Sciatic nerve (tissue), 2 donors: ENCODE measurements at regions of chr4 and their contacts with region 1.

Region 1: GRCh38 chr4:80142394-80143306 is 54.7 kb upstream of the PRDM8 start:
- DNase-seq: no peak
- ATAC-seq: no peak

Region 2: GRCh38 chr4:79738072-79738471 is 404.6 kb before region 1 on chr4:
- intact Hi-C with region 1: no loop called
- DNase-seq: no peak
- ATAC-seq: no peak

Region 3: DNA sequence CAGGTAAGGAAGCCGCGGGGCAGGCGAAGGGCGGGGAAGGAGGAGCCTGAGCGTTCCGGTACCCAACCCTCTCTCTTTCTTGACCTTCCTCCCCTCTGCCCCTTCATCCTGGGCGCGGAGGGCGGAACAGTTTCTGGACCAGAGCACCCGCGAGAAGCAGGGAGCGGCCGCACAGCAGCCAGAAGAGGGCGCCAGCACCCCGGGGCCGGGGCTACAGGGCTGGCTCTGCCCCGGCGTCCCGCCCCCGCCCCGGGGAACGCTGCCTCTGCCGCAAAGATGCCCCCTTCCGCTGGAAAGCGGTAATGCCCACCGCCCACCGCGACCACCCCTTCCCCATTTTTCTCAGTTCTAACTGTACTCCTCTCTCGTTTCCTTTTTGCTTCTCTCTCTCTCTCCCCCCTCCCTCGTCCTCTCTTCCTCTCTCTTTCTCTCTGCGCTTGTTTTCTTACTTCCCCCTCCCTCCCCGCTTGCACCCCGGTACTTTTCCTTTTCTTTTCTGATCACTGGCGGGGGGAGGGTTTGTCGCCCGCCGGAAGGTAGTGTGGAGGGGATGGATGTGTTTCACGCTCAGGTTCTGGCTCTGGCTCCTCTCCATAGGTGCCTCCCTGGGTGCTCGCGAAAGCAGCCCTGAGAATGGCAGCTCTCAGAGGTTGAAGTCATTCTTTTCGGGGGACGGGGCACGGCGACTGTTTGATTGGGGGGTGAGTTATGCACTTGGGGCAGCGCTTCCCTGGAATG is 41.6 kb after region 1 on chr4:
- intact Hi-C with region 1: no loop called
- DNase-seq: peak; percentile 97
- ATAC-seq: peak; percentile 97

Region 4: DNA sequence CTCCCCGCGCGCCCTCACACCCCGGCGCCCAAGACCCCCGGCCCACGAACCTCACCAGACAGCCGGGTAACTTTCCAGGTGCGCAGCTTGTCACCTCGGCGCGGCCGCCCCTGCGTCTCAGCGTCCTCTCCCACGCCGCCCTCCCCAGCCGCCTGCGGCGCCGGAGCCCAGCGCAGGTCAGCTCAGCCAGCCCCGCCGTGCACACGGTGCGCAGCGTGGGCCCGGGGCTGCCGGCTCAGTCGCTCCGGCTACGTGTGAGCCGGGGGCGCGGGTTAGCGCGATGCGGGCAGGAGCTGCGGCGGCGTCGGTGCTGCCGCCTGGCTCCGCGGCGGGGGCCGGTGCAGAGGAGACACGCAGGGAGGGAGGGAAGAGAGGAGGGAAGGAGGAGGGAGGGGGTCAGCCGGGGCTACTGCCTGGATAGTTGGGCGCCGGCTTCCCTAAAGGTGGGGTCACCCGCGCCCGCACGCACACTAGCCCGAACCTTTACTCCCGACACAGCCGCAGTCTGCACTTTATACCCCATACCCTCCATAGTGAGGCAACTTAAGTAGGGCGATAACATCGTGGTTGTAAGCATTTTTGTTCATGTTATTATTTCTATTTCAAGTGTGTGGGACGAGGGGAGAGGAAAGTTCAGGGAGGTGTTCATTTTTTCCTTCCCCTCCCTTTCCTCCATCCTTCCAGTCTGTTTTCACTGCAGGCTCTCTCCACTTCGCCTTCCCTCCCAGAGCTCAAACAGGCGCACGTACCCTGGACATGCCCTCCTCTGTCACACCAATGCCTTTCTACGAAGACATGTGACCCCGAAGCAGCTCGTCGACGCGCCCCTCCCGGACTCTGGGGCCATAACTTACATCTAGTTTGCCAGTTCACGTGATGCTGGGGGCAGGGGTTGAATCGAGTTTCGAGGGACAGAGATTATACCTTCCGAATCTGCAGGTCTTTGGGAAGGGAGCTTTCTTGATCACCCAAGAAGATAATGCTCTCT is 1072.5 kb after region 1 on chr4 and contains the start of gene PRKG2:
- intact Hi-C with region 1: loop called (anchors 5 kb)
- DNase-seq: no peak
- ATAC-seq: peak; percentile 50
- total RNA-seq, gene PRKG2: 3.2 TPM